H1 (cell line): ENCODE measurements at regions of chr11 and their contacts with region 1.

Region 1: DNA sequence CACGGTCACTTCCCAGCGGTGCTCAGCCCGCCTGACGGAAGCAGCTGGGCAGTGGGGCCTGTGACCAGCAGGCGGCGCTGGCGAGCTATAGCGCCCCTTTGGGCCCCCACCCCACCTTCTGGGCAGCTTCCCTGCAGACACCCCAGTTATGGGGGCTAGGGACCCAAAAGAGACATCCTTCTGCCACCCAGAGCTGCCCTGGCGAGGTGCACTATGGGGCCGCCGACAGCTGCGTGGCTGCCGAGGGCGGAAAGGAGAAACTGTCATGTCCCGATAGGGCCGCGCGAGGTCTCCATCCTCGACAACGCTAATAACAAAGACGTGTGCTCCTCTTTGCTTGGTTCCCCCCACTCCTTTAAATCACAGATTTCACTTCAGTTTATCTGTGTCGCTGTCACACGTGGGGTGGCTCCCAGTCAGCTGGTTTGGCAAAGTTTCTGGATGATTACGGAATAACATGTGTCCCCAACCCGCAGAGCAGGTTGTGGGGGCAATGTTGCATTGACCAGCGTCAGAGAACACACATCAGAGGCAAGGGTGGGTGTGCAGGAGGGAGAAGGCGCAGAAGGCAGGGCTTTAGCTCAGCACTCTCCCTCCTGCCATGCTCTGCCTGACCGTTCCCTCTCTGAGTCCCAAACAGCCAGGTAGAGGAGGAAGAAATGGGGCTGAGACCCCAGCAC is 674 bp upstream of the MYO7A start:
- DNase-seq: peak in 1 of 2 experiments; percentile 89
- H3K4me3 ChIP-seq: peak overlapping the region; percentile 5 to 59 (median 36); a peak in 7 of 8 replicates
- H3K27ac ChIP-seq: no peak overlapping the region
- H3K4me1 ChIP-seq: peaks cover 4 to 15% (median 9%) of the 10 kb centered on the region in 4 experiments
- H3K27me3 ChIP-seq: peaks cover 0 to 2% (median 0%) of the 10 kb centered on the region in 4 experiments; a peak in 1 of 7 replicates
- CTCF ChIP-seq: peak; percentile 89 to 98 (median 95)
- EP300 ChIP-seq: no peak
- POLR2A ChIP-seq: no peak
- RAD21 ChIP-seq: peak; percentile 78 to 85

Region 2: GRCh38 chr11:77073328-77074001 is 53.9 kb before region 1 on chr11:
- CTCF ChIA-PET with region 1: interaction called, 13 read pairs
- POLR2A ChIA-PET with region 1: no interaction called
- DNase-seq: no peak
- H3K4me3 ChIP-seq: no peak overlapping the region
- H3K27ac ChIP-seq: no peak overlapping the region
- H3K4me1 ChIP-seq: peaks cover 0 to 4% (median 0%) of the 10 kb centered on the region in 4 experiments; a peak in 2 of 7 replicates
- H3K27me3 ChIP-seq: no peaks in the 10 kb centered on the region
- CTCF ChIP-seq: no peak
- EP300 ChIP-seq: no peak
- POLR2A ChIP-seq: no peak
- RAD21 ChIP-seq: no peak

Region 3: GRCh38 chr11:77107950-77108349 is 19.4 kb before region 1 on chr11:
- CTCF ChIA-PET with region 1: interaction called, 170 read pairs
- POLR2A ChIA-PET with region 1: interaction called, 3 read pairs
- DNase-seq: no peak
- H3K4me3 ChIP-seq: no peak overlapping the region
- H3K27ac ChIP-seq: no peak overlapping the region
- H3K4me1 ChIP-seq: peaks cover 0 to under 1% (median 0%) of the 10 kb centered on the region in 4 experiments; a peak in 1 of 7 replicates
- H3K27me3 ChIP-seq: no peaks in the 10 kb centered on the region
- CTCF ChIP-seq: no peak
- EP300 ChIP-seq: no peak
- POLR2A ChIP-seq: no peak
- RAD21 ChIP-seq: no peak

Region 4: DNA sequence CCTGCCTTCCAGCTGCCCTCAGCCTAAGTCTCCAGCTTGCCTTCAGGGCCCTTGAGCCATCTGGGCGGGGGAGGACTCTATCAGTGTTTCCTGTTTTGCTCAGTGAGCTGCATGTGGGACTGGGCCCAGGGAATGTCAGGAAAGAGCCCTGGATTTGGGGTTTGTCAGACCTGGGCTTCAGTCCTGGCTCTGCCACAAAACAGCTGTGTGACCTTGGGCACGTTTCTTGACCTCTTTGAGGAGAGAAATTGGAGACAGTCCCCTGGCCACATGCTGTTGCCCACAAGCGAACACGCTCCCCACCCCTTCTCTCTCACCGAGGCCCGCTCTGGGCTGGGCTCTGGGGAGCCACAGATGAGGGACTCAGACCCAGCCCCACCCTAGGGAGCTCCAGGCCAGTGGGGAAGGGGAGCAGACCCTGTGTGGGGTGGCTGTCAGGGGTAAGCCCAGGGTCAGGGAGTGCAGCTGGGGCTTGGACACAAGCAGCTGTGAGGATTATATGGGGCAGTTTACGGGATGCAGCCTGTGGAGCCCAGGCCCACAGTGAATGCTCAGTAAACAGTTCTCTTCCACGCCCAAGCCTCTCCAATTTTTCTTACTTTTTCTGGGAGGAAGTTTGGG is 13.0 kb after region 1 on chr11:
- CTCF ChIA-PET with region 1: interaction called, 104 read pairs
- POLR2A ChIA-PET with region 1: interaction called, 8 read pairs
- DNase-seq: peak; percentile 9 to 54
- H3K4me3 ChIP-seq: no peak overlapping the region
- H3K27ac ChIP-seq: no peak overlapping the region
- H3K4me1 ChIP-seq: peaks cover 0 to 9% (median 3%) of the 10 kb centered on the region in 4 experiments; a peak in 4 of 7 replicates
- H3K27me3 ChIP-seq: no peaks in the 10 kb centered on the region
- CTCF ChIP-seq: no peak
- EP300 ChIP-seq: no peak
- POLR2A ChIP-seq: no peak
- RAD21 ChIP-seq: no peak

Region 5: DNA sequence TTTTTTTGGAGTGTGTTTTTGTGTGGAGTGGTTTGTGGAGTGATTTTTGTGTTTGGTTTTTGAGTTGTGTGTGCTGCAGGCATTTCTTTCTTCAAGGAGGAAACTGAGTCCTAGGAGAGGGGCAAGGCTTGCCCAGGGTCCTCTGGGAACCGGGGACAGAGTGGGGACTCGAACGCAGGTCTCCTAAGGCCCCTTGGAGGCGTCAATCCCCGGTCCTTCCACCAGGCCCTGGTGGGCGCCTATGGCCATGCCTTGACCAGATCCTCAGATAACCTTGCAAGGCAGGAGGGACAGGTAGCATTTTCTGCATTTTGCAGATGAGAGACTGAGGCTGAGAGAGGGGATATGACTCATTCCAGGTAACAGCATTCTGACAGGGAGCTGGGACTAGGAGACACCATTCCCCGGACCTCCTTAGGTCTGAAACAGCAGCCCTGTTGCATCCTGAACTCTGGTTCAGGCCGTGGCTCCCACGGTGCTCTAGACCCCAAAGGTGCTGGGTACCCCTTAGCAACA is 39.8 kb after region 1 on chr11:
- CTCF ChIA-PET with region 1: interaction called, 187 read pairs
- POLR2A ChIA-PET with region 1: interaction called, 3 read pairs
- DNase-seq: no peak
- H3K4me3 ChIP-seq: no peak overlapping the region
- H3K27ac ChIP-seq: no peak overlapping the region
- H3K4me1 ChIP-seq: peaks cover 8 to 21% (median 16%) of the 10 kb centered on the region in 4 experiments
- H3K27me3 ChIP-seq: no peaks in the 10 kb centered on the region
- CTCF ChIP-seq: no peak
- EP300 ChIP-seq: no peak
- POLR2A ChIP-seq: no peak
- RAD21 ChIP-seq: no peak

Region 6: GRCh38 chr11:77187776-77188632 is 60.6 kb after region 1 on chr11:
- CTCF ChIA-PET with region 1: interaction called, 248 read pairs
- POLR2A ChIA-PET with region 1: interaction called, 6 read pairs
- DNase-seq: peak in 1 of 2 experiments; percentile 83
- H3K4me3 ChIP-seq: no peak overlapping the region
- H3K27ac ChIP-seq: no peak overlapping the region
- H3K4me1 ChIP-seq: peaks cover 0 to 7% (median 6%) of the 10 kb centered on the region in 4 experiments; a peak in 6 of 7 replicates
- H3K27me3 ChIP-seq: no peaks in the 10 kb centered on the region
- CTCF ChIP-seq: peak; percentile 90 to 94 (median 90)
- EP300 ChIP-seq: no peak
- POLR2A ChIP-seq: no peak
- RAD21 ChIP-seq: peak; percentile 86 to 92

Region 7: GRCh38 chr11:77351281-77351906 is 224.0 kb after region 1 on chr11:
- CTCF ChIA-PET with region 1: no interaction called
- POLR2A ChIA-PET with region 1: no interaction called
- DNase-seq: no peak
- H3K4me3 ChIP-seq: no peak overlapping the region
- H3K27ac ChIP-seq: no peak overlapping the region
- H3K4me1 ChIP-seq: no peaks in the 10 kb centered on the region
- H3K27me3 ChIP-seq: no peaks in the 10 kb centered on the region
- CTCF ChIP-seq: no peak
- EP300 ChIP-seq: no peak
- POLR2A ChIP-seq: no peak
- RAD21 ChIP-seq: no peak

Region 8: GRCh38 chr11:77557554-77557953 is 430.2 kb after region 1 on chr11:
- CTCF ChIA-PET with region 1: interaction called, 14 read pairs
- POLR2A ChIA-PET with region 1: no interaction called
- DNase-seq: peak in 1 of 2 experiments; percentile 19
- H3K4me3 ChIP-seq: no peak overlapping the region
- H3K27ac ChIP-seq: no peak overlapping the region
- H3K4me1 ChIP-seq: no peaks in the 10 kb centered on the region
- H3K27me3 ChIP-seq: no peaks in the 10 kb centered on the region
- CTCF ChIP-seq: peak; percentile 56 to 73 (median 63)
- EP300 ChIP-seq: no peak
- POLR2A ChIP-seq: no peak
- RAD21 ChIP-seq: peak; percentile 82 to 85